ENCODE measurements at regions of chr9 and their contacts with region 1.

Region 1: DNA sequence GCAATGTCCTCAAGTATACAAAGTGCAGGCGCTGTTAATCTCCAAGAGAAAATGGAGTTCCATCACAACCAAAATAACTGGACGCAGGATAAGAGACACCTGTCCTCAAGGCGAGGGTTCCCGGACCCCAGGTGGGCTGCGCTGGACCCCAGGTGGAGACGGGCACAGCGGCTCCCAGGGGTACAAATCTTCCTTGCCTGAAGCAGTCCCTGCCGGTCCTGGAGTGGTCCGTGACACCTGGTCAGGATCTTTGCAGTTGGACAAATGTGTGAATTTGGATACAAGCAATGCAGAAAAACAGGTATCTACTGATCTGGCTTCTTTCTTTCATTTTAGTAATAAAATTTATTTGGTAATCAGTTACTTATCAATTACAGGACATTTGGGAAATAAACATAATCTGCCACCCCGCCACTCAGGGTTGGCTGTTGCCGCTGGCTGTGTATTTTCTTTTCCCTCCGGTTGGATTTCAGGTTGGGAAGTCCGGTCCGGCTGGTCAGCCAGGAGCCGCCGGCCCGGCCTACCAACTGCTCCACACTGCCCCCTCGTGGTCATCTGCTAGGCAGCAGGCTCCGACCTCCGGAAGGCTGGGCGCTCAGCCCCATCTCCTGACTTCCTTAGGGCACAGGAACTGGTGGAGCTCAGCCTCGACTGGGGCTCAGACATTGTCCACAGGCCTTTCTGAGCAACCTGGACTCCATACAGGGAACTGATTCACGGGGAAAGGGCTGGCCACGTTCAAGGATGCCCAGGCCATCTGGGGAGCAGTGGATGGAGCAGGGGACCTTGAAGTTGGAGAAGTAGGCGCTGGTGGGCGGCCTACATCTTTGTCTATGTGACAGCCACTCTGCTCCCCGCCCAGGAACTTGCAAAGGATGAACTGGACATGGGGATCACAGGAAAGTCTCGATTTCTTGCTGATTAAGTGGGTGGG is 43.4 kb downstream of the NXNL2 start:
- DNase-seq: peak; percentile 89
- ATAC-seq: peak; percentile 94

Region 2: GRCh38 chr9:88106491-88106890 is 471.9 kb before region 1 on chr9:
- intact Hi-C with region 1: loop called (anchors 5 kb)
- DNase-seq: no peak
- ATAC-seq: peak; percentile 66

Region 3: GRCh38 chr9:88173378-88173999 is 404.9 kb before region 1 on chr9:
- intact Hi-C with region 1: loop called (anchors 10 kb)
- DNase-seq: peak; percentile 55
- ATAC-seq: peak; percentile 69

Measured in Right ventricle myocardium superior (tissue), 1 donor.